ENCODE measurements at regions of chr1 and their contacts with region 1.

Region 1: GRCh38 chr1:85042413-85042812 is 5.9 kb downstream of the MCOLN3 start:
- DNase-seq: no peak
- ATAC-seq: no peak
- H3K4me3 Mint-ChIP-seq: no peak overlapping the region
- H3K27ac Mint-ChIP-seq: no peak overlapping the region
- H3K4me1 Mint-ChIP-seq: peaks cover 2% of the 10 kb centered on the region
- H3K27me3 Mint-ChIP-seq: peaks cover 36% of the 10 kb centered on the region

Region 2: GRCh38 chr1:85027242-85027983 is 15.0 kb before region 1 on chr1:
- CTCF ChIA-PET with region 1: interaction called, 4 read pairs
- POLR2A ChIA-PET with region 1: interaction called, 9 read pairs
- intact Hi-C with region 1: loop called in 1 of 2 experiments (anchors 2 kb)
- DNase-seq: peak; percentile 21
- ATAC-seq: peak; percentile 84
- H3K4me3 Mint-ChIP-seq: no peak overlapping the region
- H3K27ac Mint-ChIP-seq: peak overlapping the region; percentile 70
- H3K4me1 Mint-ChIP-seq: peaks cover 10% of the 10 kb centered on the region
- H3K27me3 Mint-ChIP-seq: no peaks in the 10 kb centered on the region